ENCODE measurements at regions of chr5 and their contacts with region 1.

Region 1: DNA sequence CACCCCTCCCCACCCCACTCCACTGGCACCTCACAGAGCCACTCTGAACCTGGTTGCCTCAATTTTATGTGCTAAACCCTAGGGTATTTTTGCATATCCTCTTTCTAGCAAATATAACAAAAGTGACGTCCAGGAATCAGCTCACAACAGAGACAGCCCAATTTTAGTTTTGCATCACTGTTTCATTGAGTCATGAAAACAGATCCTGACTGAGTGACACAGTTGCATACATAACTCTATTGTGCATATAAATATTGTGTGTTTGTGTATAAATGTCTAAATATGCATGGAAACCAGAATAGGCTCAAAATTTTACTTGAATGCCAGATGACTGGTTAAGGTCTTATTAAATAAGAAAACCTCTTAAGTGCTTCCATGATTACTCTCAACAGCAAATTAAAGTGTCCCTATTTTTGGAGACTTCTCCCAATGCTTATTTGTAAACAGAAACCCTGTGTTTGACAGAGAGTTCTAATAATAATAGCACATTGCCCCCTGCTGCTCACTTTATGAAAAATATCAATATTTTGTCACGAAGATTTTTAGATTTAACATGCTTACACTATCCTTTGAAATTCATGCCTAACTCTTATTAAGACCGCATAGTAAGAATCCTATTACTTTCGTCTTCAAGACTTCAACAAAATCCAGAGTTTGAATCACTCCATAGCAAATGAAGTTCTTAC is 75.5 kb upstream of the PRRC1 start:
- DNase-seq: peak; percentile 8
- H3K4me3 ChIP-seq: no peak overlapping the region
- H3K27ac ChIP-seq: no peak overlapping the region
- H3K4me1 ChIP-seq: no peaks in the 10 kb centered on the region
- CTCF ChIP-seq: peak; percentile 72

Region 2: GRCh38 chr5:126656396-126657007 is 785.4 kb before region 1 on chr5:
- CTCF ChIA-PET with region 1: no interaction called
- POLR2A ChIA-PET with region 1: no interaction called
- intact Hi-C with region 1: loop called (anchors 5 kb)
- DNase-seq: peak; percentile 55
- H3K4me3 ChIP-seq: no peak overlapping the region
- H3K27ac ChIP-seq: no peak overlapping the region
- H3K4me1 ChIP-seq: peaks cover 6% of the 10 kb centered on the region
- CTCF ChIP-seq: peak; percentile 97

Region 3: DNA sequence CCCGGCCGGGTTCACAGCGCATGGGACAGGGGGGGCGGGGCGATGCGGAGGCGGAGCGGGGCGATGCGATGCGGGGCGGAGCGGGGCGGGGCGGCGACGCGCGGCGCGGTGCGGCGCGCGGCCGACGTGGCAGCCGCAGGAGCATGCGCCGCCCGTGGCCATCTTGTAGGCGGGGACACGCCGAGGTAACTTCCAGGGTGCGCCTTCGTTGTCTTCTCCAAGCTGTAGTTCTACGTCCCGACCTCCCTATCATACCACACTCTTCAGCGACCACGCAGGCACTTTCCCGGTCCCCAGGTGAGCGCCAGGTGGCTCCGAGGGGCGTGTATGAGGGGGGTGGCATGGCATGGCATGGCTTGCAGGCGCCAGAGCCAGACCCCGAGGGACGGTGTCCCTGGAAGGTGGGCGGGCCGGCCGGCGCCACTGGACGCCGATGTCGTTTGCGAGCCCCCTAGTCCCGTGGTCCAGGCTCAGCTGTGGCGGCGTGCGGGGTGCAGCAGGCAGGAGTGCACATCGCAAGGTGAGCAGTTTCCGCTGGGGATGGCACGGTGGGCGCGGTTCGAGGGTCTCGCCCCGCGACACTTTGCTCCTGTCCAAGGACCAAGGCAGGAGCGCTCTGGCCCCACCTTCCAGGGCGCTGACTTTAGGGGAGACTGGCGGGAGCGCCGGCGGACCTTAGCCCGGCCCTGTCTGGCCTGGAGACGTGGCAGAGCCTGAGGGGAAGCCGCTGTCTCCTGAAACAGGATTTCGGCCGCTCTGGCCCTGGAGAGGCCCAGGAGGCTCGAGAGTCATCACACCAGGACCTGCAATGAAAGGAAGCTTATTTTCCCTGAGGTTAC is 75.8 kb after region 1 on chr5 and contains the start of gene PRRC1:
- CTCF ChIA-PET with region 1: no interaction called
- POLR2A ChIA-PET with region 1: no interaction called
- intact Hi-C with region 1: no loop called
- DNase-seq: peak; percentile 87
- H3K4me3 ChIP-seq: peak within 1 kb of the TSS; percentile 99
- H3K27ac ChIP-seq: peak within 1 kb of the TSS; percentile 51
- H3K4me1 ChIP-seq: peaks cover 14% of the 10 kb centered on the region
- CTCF ChIP-seq: no peak
- total RNA-seq, gene PRRC1: 32.7 and 37.3 TPM in 2 replicates

Measured in OCI-LY7 (cell line).